ENCODE measurements at regions of chr12 and their contacts with region 1.

Region 1: DNA sequence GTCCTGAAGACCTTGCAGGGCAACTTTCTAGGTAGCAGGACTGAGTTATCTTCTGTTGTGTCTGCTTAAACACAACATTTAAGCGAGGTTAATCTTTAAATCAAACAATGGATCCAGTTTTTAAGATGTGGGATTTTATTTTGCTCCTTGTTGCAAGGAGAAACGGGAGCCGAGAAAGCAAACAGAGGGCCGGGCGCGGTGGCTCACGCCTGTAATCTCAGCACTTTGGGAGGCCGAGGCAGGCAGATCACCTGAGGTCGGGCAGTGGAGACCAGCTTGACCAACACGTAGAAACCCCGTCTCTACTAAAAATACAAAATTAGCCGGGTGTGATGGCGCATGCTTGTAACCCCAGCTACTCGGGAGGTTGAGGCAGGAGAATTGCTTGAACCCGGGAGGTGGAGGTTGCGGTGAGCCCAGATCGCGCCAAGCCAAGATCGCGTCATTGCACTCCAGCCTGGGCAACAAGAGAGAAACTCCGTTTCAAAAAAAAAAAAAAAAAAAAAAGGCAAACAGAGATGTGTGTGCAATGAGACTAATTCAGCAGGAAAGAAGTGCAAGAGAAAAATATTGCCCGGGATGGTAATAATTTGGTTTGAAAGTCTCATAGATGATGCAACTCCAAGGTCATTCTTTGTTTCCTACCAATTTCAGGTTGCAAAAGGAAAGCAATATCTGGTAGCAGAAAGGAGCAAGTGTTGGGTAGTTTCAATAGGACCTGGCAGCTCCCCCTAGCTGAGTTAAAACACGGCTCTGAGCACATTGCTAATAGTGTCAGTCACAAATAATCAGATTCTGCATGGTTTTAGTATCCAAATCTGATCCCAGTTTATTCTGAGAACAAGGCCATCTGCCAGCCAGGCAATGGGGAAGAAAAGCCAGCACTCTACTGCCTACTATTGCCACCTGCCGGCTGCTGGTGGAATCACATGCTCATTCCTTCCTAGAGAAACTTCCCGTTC is 141.4 kb downstream of the PPM1H start:
- DNase-seq: peak; percentile 90
- H3K4me3 ChIP-seq: no peak overlapping the region
- H3K27ac ChIP-seq: no peak overlapping the region
- H3K4me1 ChIP-seq: peaks cover 0 to 7% (median 0%) of the 10 kb centered on the region in 4 donors
- H3K27me3 ChIP-seq: no peaks in the 10 kb centered on the region
- CTCF ChIP-seq: peak; percentile 89 to 96 (median 94)
- EP300 ChIP-seq: no peak
- POLR2A ChIP-seq: no peak

Region 2: GRCh38 chr12:62581288-62582064 is 212.1 kb before region 1 on chr12:
- intact Hi-C with region 1: loop called (anchors 1 kb)
- DNase-seq: no peak
- H3K4me3 ChIP-seq: no peak overlapping the region
- H3K27ac ChIP-seq: no peak overlapping the region
- H3K4me1 ChIP-seq: no peaks in the 10 kb centered on the region
- H3K27me3 ChIP-seq: no peaks in the 10 kb centered on the region
- CTCF ChIP-seq: peak; percentile 27 to 67 (median 57)
- EP300 ChIP-seq: no peak
- POLR2A ChIP-seq: no peak